ENCODE measurements at regions of chr2 and their contacts with region 1.

Region 1: DNA sequence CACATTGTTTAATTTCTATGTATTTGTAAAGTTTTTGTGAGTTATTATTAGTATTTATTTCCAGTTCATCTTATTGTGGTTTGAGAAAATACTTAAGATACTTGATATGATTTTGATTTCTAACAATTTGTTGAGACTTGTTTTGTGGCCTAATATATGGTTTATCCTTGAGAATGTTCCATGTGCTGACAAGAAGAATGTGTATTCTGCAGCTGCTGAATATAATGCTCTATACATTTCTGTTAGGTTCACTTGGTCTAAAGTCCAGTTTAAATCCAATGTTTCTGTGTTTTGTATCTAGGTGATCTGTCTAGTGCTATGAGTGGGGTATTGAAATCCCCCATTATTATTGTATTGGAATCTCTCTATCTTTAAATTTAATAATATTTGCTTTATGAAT is 201.3 kb downstream of the FSIP2 start:
- DNase-seq: no peak
- H3K4me3 ChIP-seq: no peak overlapping the region
- CTCF ChIP-seq: no peak
- POLR2A ChIP-seq: no peak

Region 2: GRCh38 chr2:184543832-184544231 is 1396.0 kb before region 1 on chr2:
- intact Hi-C with region 1: loop called (anchors 5 kb)
- DNase-seq: no peak
- H3K4me3 ChIP-seq: no peak overlapping the region
- CTCF ChIP-seq: no peak
- POLR2A ChIP-seq: no peak

Region 3: DNA sequence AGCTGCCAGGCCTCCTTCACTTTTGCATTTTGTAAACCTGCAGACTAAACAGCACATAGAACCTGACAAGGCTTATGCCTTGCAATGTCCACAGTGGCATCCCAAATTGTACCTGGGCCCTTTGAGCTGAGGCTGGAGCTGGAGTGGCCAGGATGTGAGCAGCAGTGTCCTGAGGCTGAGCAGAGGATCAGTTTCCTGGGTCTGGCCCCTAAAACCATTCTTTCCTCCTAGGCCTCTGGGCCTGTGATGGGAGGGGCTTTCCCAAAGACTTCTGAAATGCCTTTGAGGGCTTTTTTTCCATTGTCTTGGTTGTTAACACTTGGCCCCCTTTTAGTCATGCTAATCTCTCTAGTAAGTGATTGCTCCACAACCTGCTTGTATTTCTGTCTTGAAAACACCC is 168.5 kb before region 1 on chr2:
- intact Hi-C with region 1: no loop called
- DNase-seq: no peak
- H3K4me3 ChIP-seq: no peak overlapping the region
- CTCF ChIP-seq: no peak
- POLR2A ChIP-seq: no peak

Region 4: DNA sequence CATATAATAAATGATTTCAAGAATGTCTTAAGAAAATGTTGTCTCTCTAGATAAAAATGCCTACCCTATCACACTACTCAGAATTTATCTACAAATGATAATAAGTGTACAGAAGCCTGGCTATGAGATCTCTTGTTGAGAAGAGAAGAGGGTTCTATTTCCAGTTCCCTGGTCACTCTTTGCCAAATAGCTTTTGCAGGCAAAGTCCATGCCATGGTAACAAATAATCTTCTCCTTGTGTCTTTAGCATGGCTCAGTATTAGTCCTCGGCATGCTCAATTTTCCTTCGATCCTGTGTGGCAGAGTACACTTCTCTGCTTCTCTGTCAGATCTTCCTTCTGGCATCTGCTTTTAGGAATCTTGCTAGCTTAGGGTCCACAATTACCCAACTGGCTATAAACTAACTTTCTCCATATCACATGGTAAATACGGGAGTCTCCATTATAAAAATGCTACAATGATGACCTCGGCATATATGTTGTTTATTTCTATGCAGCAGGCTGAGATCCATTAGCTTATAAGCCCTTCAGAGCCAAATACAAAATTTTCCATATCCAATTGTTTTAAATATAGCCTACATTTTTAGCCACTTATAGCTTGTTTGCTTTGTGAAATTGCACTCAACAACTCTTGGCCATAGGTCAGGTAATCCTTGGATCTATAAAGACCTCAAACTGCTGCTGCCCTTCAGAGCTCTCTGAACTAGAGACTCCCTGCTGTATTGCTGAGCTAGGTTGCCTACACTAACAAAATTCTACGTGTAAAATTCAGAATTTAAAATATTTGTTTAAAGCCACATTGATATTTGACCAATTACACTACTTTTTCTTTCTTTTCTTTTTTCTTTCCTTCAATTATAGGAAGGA is 43.8 kb before region 1 on chr2:
- intact Hi-C with region 1: no loop called
- DNase-seq: no peak
- H3K4me3 ChIP-seq: no peak overlapping the region
- CTCF ChIP-seq: no peak
- POLR2A ChIP-seq: no peak

Measured in lower leg skin (tissue), 4 donors.